ENCODE measurements at regions of chr3 and their contacts with region 1.

Region 1: GRCh38 chr3:152183473-152183872 is 85.3 kb upstream of the MBNL1 start:
- DNase-seq: peak; percentile 58
- H3K4me3 Mint-ChIP-seq: no peak overlapping the region
- H3K27ac Mint-ChIP-seq: no peak overlapping the region
- H3K4me1 Mint-ChIP-seq: peaks cover 8% of the 10 kb centered on the region
- H3K27me3 Mint-ChIP-seq: no peaks in the 10 kb centered on the region
- CTCF ChIP-seq: peak; percentile 24

Region 2: DNA sequence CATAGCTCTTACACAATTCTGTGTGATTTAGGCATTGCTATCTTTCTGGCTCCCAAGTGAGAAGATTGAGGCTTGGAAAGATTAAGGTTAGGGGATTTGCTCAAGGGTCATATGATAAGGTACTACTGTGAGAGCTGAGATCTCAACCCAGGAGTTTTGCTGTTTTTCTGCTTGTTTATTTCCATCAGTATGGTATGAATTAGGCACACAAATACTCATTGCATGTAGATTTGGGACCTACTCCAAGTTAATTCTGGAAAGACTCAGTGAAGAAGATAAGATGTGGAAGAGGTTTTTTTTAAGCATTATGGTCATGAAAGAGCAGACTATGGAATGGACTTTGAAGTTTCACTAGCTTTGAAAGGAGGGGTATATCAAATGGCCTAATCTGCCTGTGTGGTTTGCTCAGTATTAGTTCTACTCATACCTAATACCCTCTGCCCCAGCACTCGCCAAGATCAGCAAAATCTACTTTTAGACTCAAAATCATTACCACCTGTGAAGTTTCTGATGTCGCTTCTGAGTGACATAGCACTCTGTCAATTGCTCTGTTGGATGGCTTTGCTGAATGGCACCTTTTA is 97.8 kb after region 1 on chr3:
- CTCF ChIA-PET with region 1: no interaction called
- intact Hi-C with region 1: loop called (anchors 5 kb)
- DNase-seq: no peak
- H3K4me3 Mint-ChIP-seq: no peak overlapping the region
- H3K27ac Mint-ChIP-seq: no peak overlapping the region
- H3K4me1 Mint-ChIP-seq: peaks cover 78% of the 10 kb centered on the region
- H3K27me3 Mint-ChIP-seq: no peaks in the 10 kb centered on the region
- CTCF ChIP-seq: no peak

Measured in Calu3 (cell line).